ENCODE measurements at regions of chr17 and their contacts with region 1.

Region 1: GRCh38 chr17:46061435-46061834 is 62.4 kb downstream of the STH start:
- DNase-seq: no peak
- ATAC-seq: peak in 1 of 4 donors; percentile 45
- H3K4me3 ChIP-seq: no peak overlapping the region
- H3K27ac ChIP-seq: peak overlapping the region; percentile 10
- H3K4me1 ChIP-seq: peaks cover 37% of the 10 kb centered on the region
- H3K27me3 ChIP-seq: no peaks in the 10 kb centered on the region
- CTCF ChIP-seq: peak; percentile 32

Region 2: DNA sequence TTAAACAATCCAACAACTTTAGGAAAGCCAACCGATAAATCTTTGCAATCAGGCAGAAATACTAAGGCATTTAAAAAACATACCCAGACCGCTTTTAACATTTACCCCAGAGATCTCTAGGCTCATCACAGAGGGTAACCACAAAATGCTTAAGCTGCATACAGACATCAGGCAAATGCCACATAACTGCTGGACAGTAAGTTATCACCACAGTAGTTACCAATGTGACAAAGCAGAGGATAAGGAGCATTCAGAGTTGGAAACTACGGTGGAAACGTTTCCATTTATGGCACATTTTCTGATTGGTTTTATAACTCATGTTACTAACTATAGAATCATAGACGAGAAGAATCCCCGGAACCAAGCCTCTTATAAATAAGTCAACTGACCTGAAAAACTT is 54.3 kb after region 1 on chr17:
- intact Hi-C with region 1: loop called in 1 of 2 experiments (anchors 5 kb)
- DNase-seq: no peak
- ATAC-seq: peak; percentile 37 to 58 (median 54)
- H3K4me3 ChIP-seq: no peak overlapping the region
- H3K27ac ChIP-seq: peak overlapping the region; percentile 39
- H3K4me1 ChIP-seq: peaks cover 66% of the 10 kb centered on the region
- H3K27me3 ChIP-seq: no peaks in the 10 kb centered on the region
- CTCF ChIP-seq: no peak

Measured in psoas muscle (tissue), 8 donors.